ENCODE measurements at regions of chr1 and their contacts with region 1.

Region 1: DNA sequence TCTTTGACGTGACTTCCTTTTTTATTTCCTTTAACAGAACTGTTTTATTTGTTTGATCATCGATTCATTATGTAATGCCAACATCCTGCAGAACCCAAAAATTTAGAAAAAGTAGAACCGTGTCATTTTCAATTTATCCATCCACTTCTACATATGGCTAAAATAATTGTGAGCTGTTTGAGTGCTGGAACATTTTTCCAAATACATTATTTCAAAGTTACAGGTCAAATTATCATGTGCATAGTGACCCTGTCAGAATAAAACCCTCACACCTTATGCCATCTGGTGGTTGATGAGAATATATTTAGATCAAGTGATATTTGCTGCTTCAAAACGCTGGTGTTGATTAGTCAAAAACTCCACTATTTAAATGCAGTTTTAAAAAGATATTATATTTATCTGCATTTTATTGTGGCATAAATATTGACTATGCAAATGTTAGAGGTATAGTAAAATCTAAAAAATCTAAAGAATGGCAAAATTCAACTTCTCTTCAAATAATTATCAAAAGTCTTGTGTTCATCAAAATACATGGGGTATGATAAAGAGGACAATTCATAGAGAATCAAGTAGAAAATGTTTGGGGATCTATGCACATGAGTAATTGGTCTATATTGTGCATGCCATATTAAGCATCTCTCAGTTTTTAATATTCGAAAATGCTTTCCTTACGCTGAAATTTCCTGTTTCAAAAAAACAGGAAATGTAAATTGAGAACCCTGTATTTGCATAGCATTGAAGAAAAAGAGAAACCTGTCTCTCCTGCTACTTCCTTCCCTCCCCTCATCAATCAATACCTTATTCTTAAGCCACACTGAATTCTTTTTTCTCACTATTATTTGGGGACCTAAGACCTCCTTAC is 39.7 kb downstream of the UBE2U start:
- DNase-seq: peak; percentile 40
- ATAC-seq: peak; percentile 74
- H3K4me3 ChIP-seq: no peak overlapping the region
- H3K27ac ChIP-seq: no peak overlapping the region
- H3K4me1 ChIP-seq: no peaks in the 10 kb centered on the region
- H3K27me3 ChIP-seq: no peaks in the 10 kb centered on the region
- CTCF ChIP-seq: peak; percentile 48 to 77 (median 63)
- POLR2A ChIP-seq: no peak
- RAD21 ChIP-seq: peak; percentile 82

Region 2: DNA sequence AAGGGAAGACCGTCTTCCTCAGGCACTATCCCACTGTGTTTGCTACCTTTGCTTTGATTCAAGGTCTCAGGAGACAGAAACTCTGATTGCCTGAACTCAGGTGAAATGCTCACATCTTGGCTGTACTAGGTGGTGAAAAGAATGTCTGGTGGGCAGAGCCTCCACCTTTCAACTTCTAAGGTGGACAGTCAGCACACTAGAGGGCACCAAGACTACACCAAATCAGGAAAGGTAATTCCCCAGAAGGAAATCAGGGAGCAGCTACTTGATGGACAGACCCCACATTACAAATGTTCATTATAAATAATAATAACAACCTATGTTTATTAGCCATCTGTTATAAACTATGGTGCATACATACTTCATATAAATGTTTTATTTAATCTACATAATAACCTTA is 1238.3 kb before region 1 on chr1:
- CTCF ChIA-PET with region 1: interaction called, 5 read pairs
- POLR2A ChIA-PET with region 1: no interaction called
- RAD21 ChIA-PET with region 1: no interaction called
- intact Hi-C with region 1: loop called (anchors 5 kb)
- DNase-seq: peak; percentile 7
- ATAC-seq: peak; percentile 82
- H3K4me3 ChIP-seq: no peak overlapping the region
- H3K27ac ChIP-seq: no peak overlapping the region
- H3K4me1 ChIP-seq: no peaks in the 10 kb centered on the region
- H3K27me3 ChIP-seq: peaks cover 23% of the 10 kb centered on the region
- CTCF ChIP-seq: peak; percentile 28 to 46 (median 43); a peak in 3 of 6 replicates
- POLR2A ChIP-seq: no peak
- RAD21 ChIP-seq: peak; percentile 77

Region 3: GRCh38 chr1:63557365-63557987 is 685.6 kb before region 1 on chr1:
- CTCF ChIA-PET with region 1: interaction called, 27 read pairs
- POLR2A ChIA-PET with region 1: no interaction called
- RAD21 ChIA-PET with region 1: no interaction called
- intact Hi-C with region 1: loop called (anchors 1 kb)
- DNase-seq: peak; percentile 35
- ATAC-seq: no peak; the same call in none of the 2 replicates
- H3K4me3 ChIP-seq: no peak overlapping the region
- H3K27ac ChIP-seq: no peak overlapping the region
- H3K4me1 ChIP-seq: no peaks in the 10 kb centered on the region
- H3K27me3 ChIP-seq: no peaks in the 10 kb centered on the region
- CTCF ChIP-seq: peak; percentile 57 to 80 (median 74); a peak in 5 of 6 replicates
- POLR2A ChIP-seq: no peak
- RAD21 ChIP-seq: peak; percentile 57

Region 4: GRCh38 chr1:63674238-63674864 is 568.8 kb before region 1 on chr1:
- CTCF ChIA-PET with region 1: interaction called, 34 read pairs
- POLR2A ChIA-PET with region 1: no interaction called
- RAD21 ChIA-PET with region 1: interaction called, 3 to 6 read pairs
- intact Hi-C with region 1: loop called (anchors 1 kb)
- DNase-seq: peak; percentile 67
- ATAC-seq: peak; percentile 96
- H3K4me3 ChIP-seq: no peak overlapping the region
- H3K27ac ChIP-seq: no peak overlapping the region
- H3K4me1 ChIP-seq: peaks cover 7 to 28% of the 10 kb centered on the region in 2 experiments; a peak in 3 of 4 replicates
- H3K27me3 ChIP-seq: no peaks in the 10 kb centered on the region
- CTCF ChIP-seq: peak; percentile 61 to 79 (median 77); a peak in 5 of 6 replicates
- POLR2A ChIP-seq: no peak
- RAD21 ChIP-seq: peak; percentile 88

Region 5: DNA sequence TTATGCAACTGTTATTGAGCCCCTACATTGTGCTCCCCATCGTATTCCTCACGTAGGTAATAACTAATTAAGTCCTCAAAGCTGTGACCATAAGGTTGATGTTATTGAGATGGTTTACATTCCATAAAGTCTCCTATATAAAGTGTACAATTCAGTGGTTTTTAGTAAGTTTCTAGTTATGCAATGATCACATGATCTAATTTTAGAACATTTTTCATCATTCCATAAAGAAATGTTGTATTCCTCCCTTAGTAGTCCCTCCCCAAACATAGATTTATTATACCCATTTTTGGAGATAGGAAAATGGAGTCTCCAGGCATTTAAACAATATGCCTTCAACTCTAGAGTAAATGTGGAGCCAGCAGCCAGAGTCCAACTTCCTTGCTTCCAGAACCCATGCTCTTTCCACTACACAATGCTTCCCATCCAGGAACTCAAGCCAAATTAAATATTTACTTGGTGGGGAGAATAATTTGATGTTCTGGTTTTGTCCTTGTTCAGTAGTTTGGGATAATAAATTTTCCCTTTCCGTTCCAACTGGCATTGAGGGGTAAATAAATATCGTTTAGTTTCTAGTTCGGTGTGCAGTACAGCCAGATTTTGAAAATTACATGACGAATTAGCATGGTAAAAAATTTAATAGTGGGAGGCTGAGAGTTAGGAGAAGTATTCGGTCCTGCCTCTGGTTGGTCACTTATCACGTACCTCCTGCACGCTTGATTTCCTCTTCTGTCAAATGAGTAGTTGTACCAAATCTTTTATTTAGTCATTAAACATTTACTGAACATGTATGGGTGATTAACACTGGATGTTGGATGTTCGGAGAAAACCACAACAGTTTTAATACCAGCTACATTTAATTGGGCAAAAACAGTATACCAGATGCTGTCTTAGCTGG is 293.1 kb after region 1 on chr1:
- CTCF ChIA-PET with region 1: no interaction called
- POLR2A ChIA-PET with region 1: no interaction called
- RAD21 ChIA-PET with region 1: no interaction called
- intact Hi-C with region 1: no loop called
- DNase-seq: no peak
- ATAC-seq: no peak
- H3K4me3 ChIP-seq: no peak overlapping the region
- H3K27ac ChIP-seq: no peak overlapping the region
- H3K4me1 ChIP-seq: peaks cover 0 to 7% of the 10 kb centered on the region in 2 experiments; a peak in 1 of 4 replicates
- H3K27me3 ChIP-seq: no peaks in the 10 kb centered on the region
- CTCF ChIP-seq: no peak
- POLR2A ChIP-seq: no peak
- RAD21 ChIP-seq: no peak

Measured in HCT116 (cell line).